ENCODE measurements at regions of chr9 and their contacts with region 1.

Region 1: DNA sequence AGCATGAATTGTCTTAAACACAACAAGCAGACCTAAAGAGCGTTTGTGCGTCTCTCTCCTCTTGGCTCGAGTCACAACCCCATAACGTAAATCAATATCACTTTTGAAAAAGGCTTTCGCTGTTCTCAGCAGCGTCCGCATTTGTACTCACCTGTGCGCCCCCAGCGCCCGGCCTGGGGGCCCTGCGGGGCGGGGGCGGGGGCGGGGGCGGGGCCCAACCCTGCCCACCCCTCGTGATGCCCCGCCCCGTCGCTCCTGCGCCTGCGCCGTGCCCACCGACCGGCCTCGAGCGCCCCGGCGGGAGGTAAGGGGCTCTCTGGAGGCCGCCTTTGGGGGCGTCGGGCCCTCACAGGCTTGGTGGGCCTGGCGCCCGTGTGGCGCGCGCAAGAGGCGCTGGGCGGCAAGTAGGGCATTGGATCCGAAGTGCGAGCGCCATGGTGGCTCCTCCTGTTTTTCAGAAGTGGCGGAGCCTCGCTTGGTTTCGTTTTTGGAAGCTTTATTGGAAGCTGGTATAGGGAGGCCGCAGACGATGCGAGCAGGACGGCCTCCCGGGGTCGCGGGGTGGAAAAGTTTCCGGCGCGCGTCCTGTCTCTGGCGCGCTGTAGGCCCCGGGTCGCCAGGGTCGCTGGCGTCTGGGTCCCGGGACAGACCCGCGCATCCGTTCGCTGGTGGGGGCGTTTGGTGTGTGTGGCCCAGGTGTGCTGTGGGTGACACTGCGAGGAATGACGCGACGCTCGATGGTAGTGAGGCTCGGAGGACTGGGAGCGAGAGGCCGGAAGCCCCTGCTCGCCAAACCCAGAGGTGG is at the start of gene STX17:
- DNase-seq: peak; percentile 72
- H3K4me3 Mint-ChIP-seq: peak within 1 kb of the TSS; percentile 96
- H3K27ac Mint-ChIP-seq: peak within 1 kb of the TSS; percentile 96
- H3K4me1 Mint-ChIP-seq: peaks cover 33% of the 10 kb centered on the region
- H3K27me3 Mint-ChIP-seq: peaks cover 13% of the 10 kb centered on the region
- total RNA-seq, gene STX17: 20.5 and 22.1 TPM in 2 replicates

Region 2: GRCh38 chr9:99851500-99851822 is 55.1 kb before region 1 on chr9:
- intact Hi-C with region 1: loop called (anchors 2 kb)
- DNase-seq: peak; percentile 64
- H3K4me3 Mint-ChIP-seq: peak overlapping the region; percentile 38
- H3K27ac Mint-ChIP-seq: peak overlapping the region; percentile 77
- H3K4me1 Mint-ChIP-seq: peaks cover 62% of the 10 kb centered on the region
- H3K27me3 Mint-ChIP-seq: peaks cover 4% of the 10 kb centered on the region

Region 3: DNA sequence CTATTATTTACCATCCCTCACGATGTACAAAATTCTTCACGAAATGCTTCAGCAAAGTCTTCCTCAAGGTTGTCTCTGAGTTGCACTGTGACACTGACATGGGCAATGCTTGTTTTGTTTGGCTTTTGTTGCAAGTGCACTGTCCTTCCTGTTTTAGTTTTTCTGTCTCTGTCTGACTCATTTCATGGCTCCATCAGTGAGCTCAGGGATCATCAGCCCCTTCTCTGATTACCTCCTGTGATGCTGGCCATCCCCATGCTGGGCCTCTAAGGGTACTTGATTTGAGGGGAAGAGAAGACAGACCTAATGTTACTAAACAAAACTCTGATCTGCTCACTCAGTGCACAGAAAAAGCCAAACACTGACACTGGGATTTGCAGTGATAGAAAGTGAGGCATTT is 37.8 kb before region 1 on chr9:
- intact Hi-C with region 1: loop called (anchors 5 kb)
- DNase-seq: no peak
- H3K4me3 Mint-ChIP-seq: no peak overlapping the region
- H3K27ac Mint-ChIP-seq: peak overlapping the region; percentile 55
- H3K4me1 Mint-ChIP-seq: peaks cover 45% of the 10 kb centered on the region
- H3K27me3 Mint-ChIP-seq: no peaks in the 10 kb centered on the region

Region 4: DNA sequence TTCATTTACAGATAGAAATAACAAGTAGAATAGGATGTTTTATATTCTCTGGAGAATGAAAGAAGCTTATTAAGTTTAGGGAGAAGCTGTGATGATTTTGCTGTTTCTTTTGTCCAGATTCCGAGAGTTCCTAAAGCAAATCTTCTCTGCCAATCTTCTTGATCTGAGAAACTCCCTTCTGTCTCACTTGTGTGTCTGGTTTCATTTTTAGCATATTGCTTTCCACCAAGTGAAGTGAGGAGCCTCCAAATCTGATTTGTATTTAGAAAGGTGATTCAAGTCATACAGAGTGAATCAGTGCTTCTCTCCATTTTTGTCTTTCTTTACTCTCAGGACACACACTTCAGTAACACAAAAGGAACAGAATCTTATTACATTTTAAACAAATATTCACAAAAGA is 48.2 kb after region 1 on chr9:
- intact Hi-C with region 1: loop called (anchors 2 kb)
- DNase-seq: no peak
- H3K4me3 Mint-ChIP-seq: no peak overlapping the region
- H3K27ac Mint-ChIP-seq: peak overlapping the region; percentile 8
- H3K4me1 Mint-ChIP-seq: peaks cover 14% of the 10 kb centered on the region
- H3K27me3 Mint-ChIP-seq: no peaks in the 10 kb centered on the region

Region 5: DNA sequence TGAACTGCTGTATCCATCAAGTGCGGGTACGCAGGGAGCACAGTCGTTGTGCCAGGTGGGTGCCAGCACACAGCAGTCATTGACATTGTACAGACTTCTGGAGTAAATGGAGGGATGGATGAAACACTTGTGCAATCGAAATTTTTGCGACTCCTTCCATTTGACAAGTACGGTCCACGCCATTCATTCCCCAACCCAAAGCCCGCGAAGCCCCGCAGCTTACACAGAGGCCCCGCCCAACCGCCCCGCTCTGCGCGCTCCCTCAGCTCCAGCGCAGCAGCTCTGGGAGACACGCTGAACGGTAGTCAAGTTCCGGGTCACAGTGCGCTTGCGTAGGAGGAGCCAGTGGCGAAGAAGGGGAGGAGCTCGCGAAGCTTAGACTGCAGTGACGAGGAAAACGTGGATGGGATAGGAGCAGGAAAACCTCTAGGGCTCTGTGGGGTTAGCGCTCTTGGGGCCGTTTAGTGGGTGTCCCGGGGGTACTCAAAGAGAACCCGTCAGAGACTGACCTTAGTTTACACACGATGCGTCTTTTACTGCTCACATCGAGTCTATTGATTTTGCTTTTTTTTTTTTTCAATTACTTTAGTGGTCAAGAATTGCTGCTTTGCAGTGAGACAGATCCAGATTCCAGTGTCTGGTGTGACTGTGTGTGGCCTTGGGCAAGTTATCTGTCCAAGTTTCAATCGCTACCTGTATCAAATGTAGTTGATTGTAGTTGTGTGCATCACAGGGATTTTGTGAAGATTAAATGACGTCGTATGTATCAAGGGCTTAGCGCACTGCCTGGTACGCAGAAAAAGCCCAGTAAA is 505.1 kb after region 1 on chr9:
- intact Hi-C with region 1: loop called (anchors 5 kb)
- DNase-seq: peak; percentile 81
- H3K4me3 Mint-ChIP-seq: peak overlapping the region; percentile 83
- H3K27ac Mint-ChIP-seq: peak overlapping the region; percentile 65
- H3K4me1 Mint-ChIP-seq: peaks cover 13% of the 10 kb centered on the region
- H3K27me3 Mint-ChIP-seq: peaks cover 11% of the 10 kb centered on the region